A673 (cell line): ENCODE measurements at regions of chr3 and their contacts with region 1.

Region 1: GRCh38 chr3:192467230-192468140 is 259.9 kb downstream of the FGF12 start:
- DNase-seq: peak; percentile 55
- H3K4me3 ChIP-seq: no peak overlapping the region
- H3K27ac ChIP-seq: no peak overlapping the region
- H3K4me1 ChIP-seq: no peaks in the 10 kb centered on the region
- H3K27me3 ChIP-seq: no peaks in the 10 kb centered on the region
- CTCF ChIP-seq: peak; percentile 89

Region 2: GRCh38 chr3:192444096-192444790 is 23.2 kb before region 1 on chr3:
- CTCF ChIA-PET with region 1: interaction called, 11 read pairs
- POLR2A ChIA-PET with region 1: no interaction called
- intact Hi-C with region 1: no loop called
- DNase-seq: peak; percentile 76
- H3K4me3 ChIP-seq: no peak overlapping the region
- H3K27ac ChIP-seq: no peak overlapping the region
- H3K4me1 ChIP-seq: peaks cover 18% of the 10 kb centered on the region
- H3K27me3 ChIP-seq: no peaks in the 10 kb centered on the region
- CTCF ChIP-seq: peak; percentile 99

Region 3: DNA sequence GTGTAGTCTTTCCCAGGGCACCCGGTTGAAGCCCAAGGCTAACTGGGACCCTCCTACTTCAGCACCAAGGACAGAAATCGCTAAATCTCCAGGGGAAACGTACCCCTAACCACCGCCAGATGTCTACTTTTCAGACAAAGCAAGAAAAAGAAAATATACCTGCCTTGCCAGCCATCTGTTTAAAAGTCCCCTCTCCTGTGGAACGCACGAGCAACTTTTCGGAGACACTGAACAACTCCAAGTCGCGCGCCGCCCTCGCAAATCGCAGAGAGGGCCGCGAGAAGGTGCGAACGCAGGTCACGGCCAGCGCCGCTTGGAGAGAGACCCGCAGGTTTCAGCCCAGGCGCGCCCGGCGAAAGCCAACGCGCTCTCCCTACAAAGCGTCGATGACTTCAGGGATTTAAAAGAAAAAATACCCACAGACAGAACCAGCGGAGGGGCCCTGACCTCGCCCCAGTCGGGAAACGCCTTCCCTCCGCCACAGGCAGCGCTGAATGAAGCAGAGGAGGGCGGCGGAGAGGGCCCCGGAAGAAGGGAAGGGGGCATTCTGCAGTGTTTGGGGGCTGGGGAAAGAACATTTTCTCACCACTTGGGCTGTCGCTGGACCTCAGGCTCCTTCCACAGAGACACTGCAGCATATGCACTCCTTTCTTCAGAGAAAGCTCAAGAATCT is 46.7 kb after region 1 on chr3:
- CTCF ChIA-PET with region 1: no interaction called
- POLR2A ChIA-PET with region 1: no interaction called
- intact Hi-C with region 1: no loop called
- DNase-seq: peak; percentile 62
- H3K4me3 ChIP-seq: peak overlapping the region; percentile 35
- H3K27ac ChIP-seq: no peak overlapping the region
- H3K4me1 ChIP-seq: peaks cover 9% of the 10 kb centered on the region
- H3K27me3 ChIP-seq: peaks cover 78% of the 10 kb centered on the region
- CTCF ChIP-seq: no peak; the same call in 1 of the 2 replicates

Region 4: GRCh38 chr3:192566706-192567290 is 99.3 kb after region 1 on chr3:
- CTCF ChIA-PET with region 1: no interaction called
- POLR2A ChIA-PET with region 1: no interaction called
- intact Hi-C with region 1: loop called (anchors 1 kb)
- DNase-seq: peak; percentile 76
- H3K4me3 ChIP-seq: no peak overlapping the region
- H3K27ac ChIP-seq: no peak overlapping the region
- H3K4me1 ChIP-seq: peaks cover 6% of the 10 kb centered on the region
- H3K27me3 ChIP-seq: peaks cover 6% of the 10 kb centered on the region
- CTCF ChIP-seq: peak; percentile 80

Region 5: DNA sequence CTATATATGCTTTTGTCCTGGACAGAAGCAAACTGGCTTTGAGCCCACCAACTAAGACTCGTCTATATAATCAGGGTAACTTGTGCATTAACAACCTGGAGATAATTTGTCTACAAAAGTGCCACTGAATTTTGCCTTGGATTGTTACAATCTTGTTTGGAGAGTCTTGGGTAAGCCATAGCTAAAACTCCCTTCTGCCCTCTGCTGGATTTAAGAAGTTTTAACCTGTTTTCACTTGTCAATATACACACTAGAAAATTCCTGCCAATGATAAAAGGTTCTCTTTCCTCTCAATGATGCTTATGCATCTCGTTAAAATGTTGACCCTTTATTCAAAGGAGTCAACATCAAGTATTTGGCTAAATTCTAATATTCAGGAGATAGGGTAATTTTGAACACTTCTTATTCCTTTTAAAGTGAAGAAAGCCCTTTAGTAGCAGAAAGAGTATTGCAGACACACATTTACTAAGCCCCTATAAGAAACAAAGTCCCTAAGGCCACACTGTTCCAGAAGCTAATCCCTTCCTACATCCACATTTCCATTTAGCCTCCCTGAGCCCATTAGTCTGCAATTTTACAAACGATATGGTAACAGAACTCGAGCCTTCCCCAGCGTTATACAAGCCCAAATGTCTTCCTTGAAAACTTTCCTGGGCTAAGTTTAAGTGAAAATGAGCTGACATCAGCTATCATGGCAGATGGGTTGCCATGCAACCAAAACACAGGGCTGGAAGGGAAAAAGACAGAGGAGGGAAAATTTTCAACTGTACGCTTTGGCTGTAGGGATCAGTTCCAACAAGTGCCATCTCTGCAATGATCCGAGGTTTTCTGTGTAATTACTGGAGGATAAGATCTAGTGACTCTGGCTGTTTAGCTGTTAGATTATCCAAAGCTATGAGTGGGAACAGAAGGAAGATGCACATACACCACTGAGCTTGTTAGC is 335.7 kb after region 1 on chr3:
- CTCF ChIA-PET with region 1: interaction called, 3 read pairs
- POLR2A ChIA-PET with region 1: no interaction called
- intact Hi-C with region 1: loop called (anchors 1 kb)
- DNase-seq: peak; percentile 65
- H3K4me3 ChIP-seq: no peak overlapping the region
- H3K27ac ChIP-seq: no peak overlapping the region
- H3K4me1 ChIP-seq: no peaks in the 10 kb centered on the region
- H3K27me3 ChIP-seq: no peaks in the 10 kb centered on the region
- CTCF ChIP-seq: peak; percentile 68

Region 6: DNA sequence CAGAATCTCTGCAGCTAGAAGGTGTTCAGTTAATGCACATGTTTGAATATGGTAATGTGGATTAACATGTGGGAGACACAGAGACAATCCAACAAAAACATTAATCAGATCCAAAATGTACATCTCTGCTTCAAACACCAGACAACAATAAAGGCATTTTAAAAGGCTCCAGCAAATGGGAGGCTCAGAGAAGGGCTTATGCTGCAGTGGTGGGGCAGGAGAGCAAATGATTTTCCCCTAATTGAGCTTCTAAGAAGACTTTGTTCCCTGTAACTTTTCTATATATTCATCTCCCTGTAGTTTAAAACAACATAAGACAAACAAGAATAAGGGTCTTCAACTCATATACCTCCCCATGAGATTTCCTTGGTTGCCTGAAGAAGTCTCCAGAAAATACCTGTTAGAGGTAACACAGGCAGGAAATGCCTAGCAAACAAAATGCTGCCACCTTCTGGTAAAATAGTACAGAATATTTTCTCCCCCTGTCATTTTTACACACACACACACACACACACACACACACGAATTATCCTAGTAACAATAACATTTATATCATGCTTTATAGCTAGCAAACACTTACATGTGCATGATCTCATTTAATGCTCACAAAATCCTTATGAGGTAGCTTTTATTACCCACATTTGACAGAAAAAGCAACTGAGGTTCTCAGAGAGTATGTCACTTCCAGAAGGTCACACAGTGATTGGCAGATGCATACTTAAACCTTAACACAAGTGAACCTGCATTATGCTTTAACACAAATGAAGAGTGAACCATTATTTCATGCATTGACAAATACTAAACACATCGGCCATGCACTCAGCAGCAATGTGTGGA is 573.6 kb after region 1 on chr3:
- CTCF ChIA-PET with region 1: no interaction called
- POLR2A ChIA-PET with region 1: no interaction called
- intact Hi-C with region 1: loop called (anchors 5 kb)
- DNase-seq: peak; percentile 54
- H3K4me3 ChIP-seq: no peak overlapping the region
- H3K27ac ChIP-seq: no peak overlapping the region
- H3K4me1 ChIP-seq: no peaks in the 10 kb centered on the region
- H3K27me3 ChIP-seq: no peaks in the 10 kb centered on the region
- CTCF ChIP-seq: peak; percentile 67

Region 7: GRCh38 chr3:193564012-193564411 is 1096.5 kb after region 1 on chr3:
- CTCF ChIA-PET with region 1: no interaction called
- POLR2A ChIA-PET with region 1: no interaction called
- intact Hi-C with region 1: loop called (anchors 10 kb)
- DNase-seq: peak; percentile 23
- H3K4me3 ChIP-seq: no peak overlapping the region
- H3K27ac ChIP-seq: no peak overlapping the region
- H3K4me1 ChIP-seq: no peaks in the 10 kb centered on the region
- H3K27me3 ChIP-seq: no peaks in the 10 kb centered on the region
- CTCF ChIP-seq: peak; percentile 47